ENCODE measurements at regions of chr5 and their contacts with region 1.

Region 1: DNA sequence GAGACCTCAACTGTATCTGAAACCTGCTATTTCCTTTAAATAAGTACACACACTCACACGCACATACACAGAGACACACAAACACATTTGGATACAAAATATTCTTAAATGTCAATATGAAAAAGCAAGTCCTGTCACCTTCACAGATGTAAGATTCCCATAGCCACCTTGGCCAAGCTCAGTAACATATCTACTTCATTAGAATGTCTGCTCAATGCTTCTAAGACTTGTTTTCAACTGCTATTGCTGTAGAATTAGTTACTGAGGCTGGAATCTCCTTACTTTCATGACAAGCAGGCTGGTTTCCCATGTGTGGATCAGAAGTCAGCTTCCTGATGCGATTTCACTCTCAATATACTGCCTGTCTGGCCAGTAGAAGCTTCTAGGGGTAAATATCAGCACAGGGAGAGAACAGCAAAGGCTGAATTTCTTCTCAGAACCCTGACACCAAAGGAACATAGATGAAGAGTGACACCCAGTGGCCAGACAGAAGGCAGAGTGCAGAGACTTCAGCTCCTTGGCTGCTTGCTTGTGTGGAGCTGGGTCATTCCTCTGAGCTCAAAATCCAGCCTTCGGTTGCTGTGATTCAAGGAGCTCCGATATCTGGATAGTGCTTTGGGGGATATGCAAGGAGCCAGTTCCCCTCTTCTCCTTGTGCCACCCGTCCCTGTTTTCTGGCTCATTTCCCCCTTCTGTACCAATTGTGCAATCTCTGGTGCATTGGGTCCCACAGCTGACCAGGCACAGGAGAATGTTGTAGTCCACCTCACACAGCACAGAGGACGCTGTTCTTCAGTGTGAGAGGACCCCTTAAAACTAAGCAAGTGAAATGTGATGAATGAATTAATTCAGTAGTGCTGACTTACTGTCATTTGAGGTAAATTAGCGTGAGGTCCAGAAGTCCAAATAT is 26.6 kb upstream of the ABLIM3 start:
- DNase-seq: peak; percentile 21
- ATAC-seq: no peak
- H3K4me3 ChIP-seq: no peak overlapping the region
- H3K4me3 Mint-ChIP-seq: no peak overlapping the region
- H3K27ac ChIP-seq: no peak overlapping the region
- H3K27ac Mint-ChIP-seq: no peak overlapping the region
- H3K4me1 ChIP-seq: no peaks in the 10 kb centered on the region
- H3K4me1 Mint-ChIP-seq: no peaks in the 10 kb centered on the region
- H3K27me3 ChIP-seq: no peaks in the 10 kb centered on the region
- H3K27me3 Mint-ChIP-seq: peaks cover 31% of the 10 kb centered on the region
- CTCF ChIP-seq: peak; percentile 44

Region 2: GRCh38 chr5:147547730-147548129 is 1566.9 kb before region 1 on chr5:
- CTCF ChIA-PET with region 1: no interaction called
- POLR2A ChIA-PET with region 1: no interaction called
- intact Hi-C with region 1: no loop called
- DNase-seq: no peak
- ATAC-seq: no peak
- H3K4me3 ChIP-seq: no peak overlapping the region
- H3K4me3 Mint-ChIP-seq: no peak overlapping the region
- H3K27ac ChIP-seq: no peak overlapping the region
- H3K27ac Mint-ChIP-seq: no peak overlapping the region
- H3K4me1 ChIP-seq: no peaks in the 10 kb centered on the region
- H3K4me1 Mint-ChIP-seq: no peaks in the 10 kb centered on the region
- H3K27me3 ChIP-seq: no peaks in the 10 kb centered on the region
- H3K27me3 Mint-ChIP-seq: peaks cover 3% of the 10 kb centered on the region
- CTCF ChIP-seq: no peak

Region 3: GRCh38 chr5:147949711-147950573 is 1164.7 kb before region 1 on chr5:
- CTCF ChIA-PET with region 1: no interaction called
- POLR2A ChIA-PET with region 1: no interaction called
- intact Hi-C with region 1: loop called (anchors 10 kb)
- DNase-seq: peak; percentile 8
- ATAC-seq: no peak
- H3K4me3 ChIP-seq: no peak overlapping the region
- H3K4me3 Mint-ChIP-seq: no peak overlapping the region
- H3K27ac ChIP-seq: no peak overlapping the region
- H3K27ac Mint-ChIP-seq: no peak overlapping the region
- H3K4me1 ChIP-seq: no peaks in the 10 kb centered on the region
- H3K4me1 Mint-ChIP-seq: no peaks in the 10 kb centered on the region
- H3K27me3 ChIP-seq: no peaks in the 10 kb centered on the region
- H3K27me3 Mint-ChIP-seq: peaks cover 2% of the 10 kb centered on the region
- CTCF ChIP-seq: peak; percentile 65

Region 4: GRCh38 chr5:148179234-148179824 is 935.3 kb before region 1 on chr5:
- CTCF ChIA-PET with region 1: no interaction called
- POLR2A ChIA-PET with region 1: no interaction called
- intact Hi-C with region 1: loop called (anchors 10 kb)
- DNase-seq: peak; percentile 54
- ATAC-seq: no peak
- H3K4me3 ChIP-seq: no peak overlapping the region
- H3K4me3 Mint-ChIP-seq: no peak overlapping the region
- H3K27ac ChIP-seq: no peak overlapping the region
- H3K27ac Mint-ChIP-seq: no peak overlapping the region
- H3K4me1 ChIP-seq: no peaks in the 10 kb centered on the region
- H3K4me1 Mint-ChIP-seq: no peaks in the 10 kb centered on the region
- H3K27me3 ChIP-seq: no peaks in the 10 kb centered on the region
- H3K27me3 Mint-ChIP-seq: peaks cover 12% of the 10 kb centered on the region
- CTCF ChIP-seq: peak; percentile 70

Region 5: GRCh38 chr5:148443998-148444397 is 670.7 kb before region 1 on chr5:
- CTCF ChIA-PET with region 1: interaction called, 3 read pairs
- POLR2A ChIA-PET with region 1: no interaction called
- intact Hi-C with region 1: loop called (anchors 5 kb)
- DNase-seq: peak; percentile 57
- ATAC-seq: peak; percentile 54
- H3K4me3 ChIP-seq: no peak overlapping the region
- H3K4me3 Mint-ChIP-seq: no peak overlapping the region
- H3K27ac ChIP-seq: no peak overlapping the region
- H3K27ac Mint-ChIP-seq: no peak overlapping the region
- H3K4me1 ChIP-seq: no peaks in the 10 kb centered on the region
- H3K4me1 Mint-ChIP-seq: no peaks in the 10 kb centered on the region
- H3K27me3 ChIP-seq: no peaks in the 10 kb centered on the region
- H3K27me3 Mint-ChIP-seq: no peaks in the 10 kb centered on the region
- CTCF ChIP-seq: peak; percentile 88

Region 6: DNA sequence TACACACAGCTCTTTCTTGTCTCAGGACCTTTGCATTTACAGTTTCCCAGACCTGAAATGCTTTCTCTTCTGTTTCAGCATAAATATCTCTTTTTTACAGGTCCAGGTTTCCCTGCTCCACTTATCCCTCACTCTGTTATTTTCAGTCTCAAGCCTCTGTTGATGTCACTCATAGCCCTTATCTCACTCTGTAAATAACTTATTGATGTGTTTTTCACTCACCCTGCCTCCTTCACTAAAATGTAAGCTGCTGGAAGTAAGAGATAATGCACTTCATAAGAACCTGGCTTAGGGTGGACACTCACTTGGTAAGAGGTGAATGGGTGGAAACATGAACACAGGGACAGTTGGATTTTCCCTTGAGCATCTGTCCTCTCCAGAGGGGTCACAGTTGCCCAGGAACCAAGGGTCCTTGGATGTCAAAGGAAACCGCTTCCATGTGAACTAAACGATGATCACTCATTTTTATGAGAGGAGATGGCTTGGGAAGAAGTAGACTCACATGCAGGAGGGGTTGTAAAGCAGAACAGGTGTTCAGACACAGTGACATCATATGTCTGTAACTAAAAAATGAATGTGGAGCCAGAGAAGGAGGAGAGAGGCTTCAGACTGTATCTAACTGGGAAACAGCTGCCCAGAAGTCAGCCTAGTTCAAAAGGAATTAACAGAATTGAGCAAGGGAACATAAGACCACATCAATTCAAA is 454.9 kb before region 1 on chr5:
- CTCF ChIA-PET with region 1: no interaction called
- POLR2A ChIA-PET with region 1: no interaction called
- intact Hi-C with region 1: no loop called
- DNase-seq: no peak
- ATAC-seq: no peak
- H3K4me3 ChIP-seq: no peak overlapping the region
- H3K4me3 Mint-ChIP-seq: no peak overlapping the region
- H3K27ac ChIP-seq: no peak overlapping the region
- H3K27ac Mint-ChIP-seq: no peak overlapping the region
- H3K4me1 ChIP-seq: no peaks in the 10 kb centered on the region
- H3K4me1 Mint-ChIP-seq: no peaks in the 10 kb centered on the region
- H3K27me3 ChIP-seq: peaks cover 0 to 9% (median 0%) of the 10 kb centered on the region in 4 experiments
- H3K27me3 Mint-ChIP-seq: peaks cover 30% of the 10 kb centered on the region
- CTCF ChIP-seq: no peak

Region 7: GRCh38 chr5:149125386-149125891 is 10.8 kb after region 1 on chr5:
- CTCF ChIA-PET with region 1: interaction called, 13 read pairs
- POLR2A ChIA-PET with region 1: no interaction called
- intact Hi-C with region 1: no loop called
- DNase-seq: no peak
- ATAC-seq: no peak
- H3K4me3 ChIP-seq: no peak overlapping the region
- H3K4me3 Mint-ChIP-seq: no peak overlapping the region
- H3K27ac ChIP-seq: no peak overlapping the region
- H3K27ac Mint-ChIP-seq: no peak overlapping the region
- H3K4me1 ChIP-seq: no peaks in the 10 kb centered on the region
- H3K4me1 Mint-ChIP-seq: no peaks in the 10 kb centered on the region
- H3K27me3 ChIP-seq: no peaks in the 10 kb centered on the region
- H3K27me3 Mint-ChIP-seq: peaks cover 17% of the 10 kb centered on the region
- CTCF ChIP-seq: no peak

Region 8: GRCh38 chr5:149195337-149195887 is 80.8 kb after region 1 on chr5:
- CTCF ChIA-PET with region 1: no interaction called
- POLR2A ChIA-PET with region 1: no interaction called
- intact Hi-C with region 1: no loop called
- DNase-seq: no peak
- ATAC-seq: no peak
- H3K4me3 ChIP-seq: no peak overlapping the region
- H3K4me3 Mint-ChIP-seq: no peak overlapping the region
- H3K27ac ChIP-seq: no peak overlapping the region
- H3K27ac Mint-ChIP-seq: no peak overlapping the region
- H3K4me1 ChIP-seq: no peaks in the 10 kb centered on the region
- H3K4me1 Mint-ChIP-seq: no peaks in the 10 kb centered on the region
- H3K27me3 ChIP-seq: no peaks in the 10 kb centered on the region
- H3K27me3 Mint-ChIP-seq: peaks cover 3% of the 10 kb centered on the region
- CTCF ChIP-seq: no peak

Measured in B cell (primary cell).